SK-N-SH (cell line): ENCODE measurements at regions of chr1 and their contacts with region 1.

Region 1: DNA sequence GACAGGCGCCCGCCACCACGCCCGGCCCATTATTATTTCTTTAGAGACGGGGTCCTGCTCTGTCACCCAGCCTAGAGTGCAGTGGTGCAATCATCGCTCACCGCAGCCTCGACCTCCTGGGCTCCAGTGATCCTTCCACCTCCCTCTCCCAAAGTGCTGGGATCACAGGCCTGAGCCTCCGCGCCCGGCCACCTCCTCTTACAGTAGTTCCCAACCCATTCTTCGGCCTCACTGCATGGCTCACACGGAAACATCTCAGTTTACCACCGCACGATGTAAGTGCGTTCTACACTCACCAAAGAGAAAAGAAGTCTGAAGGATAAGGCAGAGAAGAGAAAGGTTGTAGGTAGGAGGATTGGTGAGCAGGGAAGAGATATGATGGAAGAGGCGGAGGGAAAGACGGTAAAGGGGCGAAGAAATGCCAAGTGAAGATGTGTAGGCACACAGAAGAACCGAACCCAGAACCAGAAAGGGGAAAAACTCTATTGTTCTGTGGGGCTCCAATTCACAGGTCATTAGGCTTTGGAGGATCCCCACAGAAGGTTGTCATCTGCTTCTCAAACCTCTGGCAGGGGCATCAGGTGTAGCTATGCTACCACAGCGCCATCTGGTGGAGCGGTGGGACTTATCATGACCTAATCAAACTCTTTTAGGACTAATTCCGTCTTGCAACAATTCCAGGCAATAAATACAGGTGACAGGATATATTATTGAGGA is 504.2 kb downstream of the SMYD3 start:
- DNase-seq: peak; percentile 86
- H3K4me3 ChIP-seq: no peak overlapping the region
- H3K27ac ChIP-seq: peak overlapping the region in 1 of 2 experiments; percentile 92; a peak in 2 of 4 replicates
- H3K4me1 ChIP-seq: peaks cover 5 to 24% of the 10 kb centered on the region in 2 experiments; a peak in 3 of 4 replicates
- H3K27me3 ChIP-seq: no peaks in the 10 kb centered on the region
- CTCF ChIP-seq: peak; percentile 92
- EP300 ChIP-seq: peak in 1 of 2 experiments; percentile 35; a peak in 1 of 4 replicates
- RAD21 ChIP-seq: peak; percentile 100

Region 2: GRCh38 chr1:245475154-245475553 is 527.7 kb before region 1 on chr1:
- CTCF ChIA-PET with region 1: no interaction called
- POLR2A ChIA-PET with region 1: no interaction called
- DNase-seq: no peak
- H3K4me3 ChIP-seq: no peak overlapping the region
- H3K27ac ChIP-seq: no peak overlapping the region
- H3K4me1 ChIP-seq: peaks cover 0 to 7% of the 10 kb centered on the region in 2 experiments; a peak in 1 of 4 replicates
- H3K27me3 ChIP-seq: no peaks in the 10 kb centered on the region
- CTCF ChIP-seq: no peak
- EP300 ChIP-seq: no peak
- RAD21 ChIP-seq: no peak

Region 3: DNA sequence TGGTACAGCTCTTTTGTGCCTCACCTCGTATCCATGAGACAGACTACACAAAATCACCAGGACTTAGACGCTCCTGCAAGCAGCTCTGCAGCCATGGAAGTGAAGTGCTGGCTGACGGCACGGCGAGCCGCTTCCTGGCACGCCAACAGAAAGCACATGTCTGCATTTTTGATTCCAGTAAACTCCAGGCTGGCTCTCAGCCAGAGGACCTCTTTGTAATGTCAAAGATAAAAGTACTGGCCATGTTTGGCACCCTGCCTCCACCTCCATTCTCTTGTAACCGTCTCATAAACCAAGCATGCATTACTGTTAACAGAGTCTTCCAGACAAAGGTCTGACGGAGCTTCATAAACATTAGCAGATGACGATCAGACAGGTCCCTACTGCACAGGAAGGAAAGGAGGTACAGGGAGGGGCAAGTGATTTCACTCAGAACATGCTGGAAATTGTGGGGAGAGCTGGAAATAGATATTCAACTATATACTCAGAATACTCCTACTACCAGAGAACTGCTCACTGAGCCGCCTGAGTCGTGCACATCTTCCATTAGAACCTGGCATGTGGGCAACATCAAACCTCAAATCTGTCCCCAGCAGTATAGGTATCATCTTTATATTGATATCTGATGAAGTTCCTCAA is 127.8 kb before region 1 on chr1:
- CTCF ChIA-PET with region 1: interaction called, 10 read pairs
- POLR2A ChIA-PET with region 1: no interaction called
- DNase-seq: peak; percentile 82
- H3K4me3 ChIP-seq: no peak overlapping the region
- H3K27ac ChIP-seq: peak overlapping the region; percentile 96 to 100
- H3K4me1 ChIP-seq: peaks cover 29 to 80% of the 10 kb centered on the region in 2 experiments
- H3K27me3 ChIP-seq: no peaks in the 10 kb centered on the region
- CTCF ChIP-seq: no peak
- EP300 ChIP-seq: peak; percentile 99 to 100
- RAD21 ChIP-seq: peak; percentile 54

Region 4: DNA sequence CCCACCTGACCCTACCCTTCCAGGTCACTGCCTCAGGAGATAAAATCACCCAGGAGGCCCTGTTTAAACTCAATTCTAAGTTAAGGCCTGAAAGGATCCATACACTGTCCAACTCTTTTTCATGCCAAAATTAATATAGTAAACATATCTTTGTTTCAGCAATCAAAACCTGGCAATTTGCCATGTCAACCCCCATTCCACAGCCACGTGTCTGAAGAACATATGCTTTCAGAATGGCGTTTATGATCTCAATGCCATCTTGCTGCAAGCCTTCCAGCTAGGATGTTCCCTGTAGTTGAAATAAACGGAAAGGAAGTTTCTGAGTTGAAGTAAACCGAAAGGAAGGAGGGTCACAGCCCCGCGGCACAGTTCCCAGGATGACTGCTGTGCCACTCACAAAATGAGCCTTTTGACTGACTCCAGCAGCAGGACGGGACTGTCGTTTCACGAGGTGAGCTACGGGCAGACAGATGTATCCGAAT is 32.2 kb after region 1 on chr1:
- CTCF ChIA-PET with region 1: no interaction called
- POLR2A ChIA-PET with region 1: no interaction called
- DNase-seq: peak; percentile 53
- H3K4me3 ChIP-seq: peak overlapping the region; percentile 10 to 25; a peak in 1 of 4 replicates
- H3K27ac ChIP-seq: peak overlapping the region in 1 of 2 experiments; percentile 74; a peak in 2 of 4 replicates
- H3K4me1 ChIP-seq: peaks cover 0 to 21% of the 10 kb centered on the region in 2 experiments; a peak in 2 of 4 replicates
- H3K27me3 ChIP-seq: no peaks in the 10 kb centered on the region
- CTCF ChIP-seq: no peak
- EP300 ChIP-seq: peak in 1 of 2 experiments; percentile 74; a peak in 2 of 4 replicates
- RAD21 ChIP-seq: no peak